ENCODE measurements at regions of chr6 and their contacts with region 1.

Region 1: DNA sequence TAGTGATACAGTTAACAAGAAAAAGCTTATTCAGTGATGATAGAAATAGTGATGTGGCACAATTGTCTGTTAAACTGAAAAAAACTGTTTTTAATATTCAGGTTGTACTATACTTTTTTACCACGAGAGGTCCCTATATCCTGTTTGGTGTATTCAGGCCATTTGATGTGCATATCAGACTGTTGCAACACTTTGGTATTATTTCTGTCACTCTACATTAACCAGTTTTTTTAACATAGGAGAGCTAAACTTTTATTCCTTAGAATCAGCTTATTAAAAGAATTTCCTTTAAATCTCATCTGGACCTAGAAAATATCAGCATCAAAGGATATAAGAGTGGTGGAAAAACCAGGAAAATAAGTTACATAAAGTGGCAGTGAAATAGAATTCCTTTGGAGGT is 36.8 kb downstream of the TSPYL4 start:
- DNase-seq: peak; percentile 52
- ATAC-seq: peak; percentile 67
- H3K4me3 ChIP-seq: no peak overlapping the region
- H3K27ac ChIP-seq: no peak overlapping the region
- H3K4me1 ChIP-seq: peaks cover 6% of the 10 kb centered on the region
- H3K27me3 ChIP-seq: no peaks in the 10 kb centered on the region
- CTCF ChIP-seq: peak; percentile 59
- POLR2A ChIP-seq: no peak
- RAD21 ChIP-seq: peak; percentile 54

Region 2: GRCh38 chr6:116111552-116112528 is 105.2 kb before region 1 on chr6:
- CTCF ChIA-PET with region 1: interaction called, 6 read pairs
- POLR2A ChIA-PET with region 1: no interaction called
- dilution Hi-C with region 1: no loop called
- in situ Hi-C with region 1: no loop called
- intact Hi-C with region 1: loop called (anchors 5 kb)
- DNase-seq: peak; percentile 44
- ATAC-seq: peak; percentile 61
- H3K4me3 ChIP-seq: no peak overlapping the region
- H3K27ac ChIP-seq: no peak overlapping the region
- H3K4me1 ChIP-seq: peaks cover 2% of the 10 kb centered on the region
- H3K27me3 ChIP-seq: no peaks in the 10 kb centered on the region
- CTCF ChIP-seq: peak; percentile 50
- POLR2A ChIP-seq: no peak
- RAD21 ChIP-seq: peak; percentile 39

Region 3: DNA sequence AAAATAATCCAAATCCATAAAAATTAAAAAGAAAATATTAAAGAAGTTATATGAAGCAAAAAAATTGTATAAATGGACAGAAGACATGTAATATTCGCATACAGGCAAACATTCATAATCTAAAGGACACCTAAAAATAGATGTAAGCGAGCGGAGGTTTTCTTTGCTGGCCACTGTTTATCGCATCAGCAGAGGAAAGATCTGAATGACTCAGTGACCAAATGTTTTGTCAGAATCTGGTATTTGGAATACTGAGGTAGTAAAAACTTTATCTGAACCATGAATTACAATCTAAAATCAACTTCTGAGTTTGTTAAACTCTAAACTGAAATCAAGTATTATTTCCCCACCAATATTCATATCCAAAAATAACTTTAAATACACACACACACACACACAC is 29.0 kb after region 1 on chr6:
- CTCF ChIA-PET with region 1: interaction called, 4 read pairs
- POLR2A ChIA-PET with region 1: no interaction called
- dilution Hi-C with region 1: no loop called
- in situ Hi-C with region 1: no loop called
- intact Hi-C with region 1: loop called (anchors 2 kb)
- DNase-seq: peak; percentile 87
- ATAC-seq: peak; percentile 84
- H3K4me3 ChIP-seq: no peak overlapping the region
- H3K27ac ChIP-seq: no peak overlapping the region
- H3K4me1 ChIP-seq: peaks cover 9% of the 10 kb centered on the region
- H3K27me3 ChIP-seq: no peaks in the 10 kb centered on the region
- CTCF ChIP-seq: no peak
- POLR2A ChIP-seq: no peak
- RAD21 ChIP-seq: no peak

Region 4: DNA sequence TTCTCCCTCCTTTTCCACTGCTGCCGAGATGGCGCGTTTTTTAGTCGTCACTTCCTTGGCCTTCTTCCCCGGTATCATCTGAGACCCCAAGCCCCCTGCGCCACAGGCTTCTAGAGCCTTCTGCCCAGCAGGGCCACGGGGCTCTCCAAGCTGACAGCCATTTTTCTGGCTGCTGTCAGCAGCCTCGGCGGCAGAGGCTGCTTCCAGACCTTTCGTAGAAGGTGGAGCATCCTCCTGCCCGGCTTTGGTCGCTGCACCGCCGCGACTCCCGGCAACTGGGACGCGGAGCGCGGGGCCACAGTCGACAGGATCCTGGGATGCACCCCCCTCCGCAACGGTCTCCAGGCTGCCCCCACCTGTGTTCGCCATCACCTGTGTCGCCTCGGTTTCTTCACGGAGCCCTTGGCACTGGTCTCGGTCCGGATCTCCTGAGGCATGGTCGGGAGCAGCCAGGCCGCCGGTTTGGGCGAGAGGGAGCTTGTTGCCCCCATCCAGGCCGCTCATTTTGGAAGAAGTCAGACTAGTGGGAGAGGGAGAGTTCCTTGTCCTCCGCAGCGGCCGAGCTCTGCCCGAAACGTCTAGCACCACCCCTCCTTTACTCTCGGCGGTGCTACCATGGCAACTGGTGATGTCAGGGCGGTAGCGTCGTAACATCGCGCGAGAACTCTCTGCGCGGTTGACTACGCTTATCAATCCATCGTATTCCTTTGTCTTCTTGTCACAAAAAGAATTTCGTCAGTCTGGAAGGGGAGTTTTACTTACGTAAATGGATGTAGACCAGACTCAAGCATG is 36.6 kb after region 1 on chr6 and contains the start of gene TSPYL4:
- CTCF ChIA-PET with region 1: interaction called, 9 read pairs
- POLR2A ChIA-PET with region 1: no interaction called
- dilution Hi-C with region 1: no loop called
- in situ Hi-C with region 1: no loop called
- intact Hi-C with region 1: loop called (anchors 5 kb)
- DNase-seq: peak; percentile 97
- ATAC-seq: peak; percentile 91
- H3K4me3 ChIP-seq: peak within 1 kb of the TSS; percentile 90
- H3K27ac ChIP-seq: peak within 1 kb of the TSS; percentile 86
- H3K4me1 ChIP-seq: peaks cover 22% of the 10 kb centered on the region
- H3K27me3 ChIP-seq: no peaks in the 10 kb centered on the region
- CTCF ChIP-seq: no peak
- POLR2A ChIP-seq: peak; percentile 88
- RAD21 ChIP-seq: no peak
- total RNA-seq, gene TSPYL4: 22.0 and 23.1 TPM in 2 replicates

Region 5: GRCh38 chr6:116405138-116405537 is 188.1 kb after region 1 on chr6:
- CTCF ChIA-PET with region 1: no interaction called
- POLR2A ChIA-PET with region 1: no interaction called
- dilution Hi-C with region 1: no loop called
- in situ Hi-C with region 1: no loop called
- intact Hi-C with region 1: no loop called
- DNase-seq: peak; percentile 84
- ATAC-seq: no peak
- H3K4me3 ChIP-seq: no peak overlapping the region
- H3K27ac ChIP-seq: peak overlapping the region; percentile 55; the same call in 1 of the 2 replicates
- H3K4me1 ChIP-seq: peaks cover 13% of the 10 kb centered on the region
- H3K27me3 ChIP-seq: no peaks in the 10 kb centered on the region
- CTCF ChIP-seq: no peak
- POLR2A ChIP-seq: no peak
- RAD21 ChIP-seq: no peak

Region 6: DNA sequence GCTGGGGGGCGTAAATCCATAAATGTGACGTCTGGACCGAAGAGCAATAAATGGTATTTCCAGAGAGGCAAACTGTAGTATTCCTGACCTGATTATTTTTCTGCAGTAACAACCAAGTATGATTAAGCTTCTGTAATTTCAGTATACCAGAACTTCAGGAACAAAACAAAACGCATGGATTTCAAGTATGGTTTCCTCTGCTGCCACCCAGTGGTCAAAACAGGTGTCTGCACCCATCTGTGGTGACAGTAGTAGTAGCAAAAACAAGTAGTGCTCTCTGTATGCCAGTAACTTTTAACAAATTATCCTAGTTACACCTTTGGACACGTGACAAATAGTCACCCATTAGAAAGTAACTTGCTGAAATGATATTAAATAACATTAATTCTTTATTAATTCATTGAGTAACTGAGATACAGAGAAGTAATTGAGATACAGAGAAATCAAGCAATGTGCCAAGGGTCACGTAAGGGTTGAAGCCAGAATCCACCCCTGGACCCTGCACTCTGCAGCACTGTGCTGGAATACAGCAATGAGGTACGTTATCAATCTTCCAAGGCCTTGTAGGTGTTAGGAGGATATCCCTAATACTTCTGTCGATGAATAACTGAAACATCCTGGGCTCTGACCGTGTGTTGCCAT is 344.4 kb after region 1 on chr6:
- CTCF ChIA-PET with region 1: interaction called, 4 read pairs
- POLR2A ChIA-PET with region 1: no interaction called
- dilution Hi-C with region 1: no loop called
- in situ Hi-C with region 1: no loop called
- intact Hi-C with region 1: loop called (anchors 2 kb)
- DNase-seq: peak; percentile 75
- ATAC-seq: peak; percentile 72
- H3K4me3 ChIP-seq: no peak overlapping the region
- H3K27ac ChIP-seq: no peak overlapping the region
- H3K4me1 ChIP-seq: peaks cover 10% of the 10 kb centered on the region
- H3K27me3 ChIP-seq: no peaks in the 10 kb centered on the region
- CTCF ChIP-seq: peak; percentile 89
- POLR2A ChIP-seq: no peak
- RAD21 ChIP-seq: peak; percentile 88

Measured in IMR-90 (cell line).